Activated T-helper 2 cell treated with anti-CD3 and anti-CD28 coated beads, Interferon-gamma antibody, Interleukin-2, Interleukin-4, amounts not matched to agents 10 μg/mL and 5 μg/mL and 100 μg/mL, durations not matched to agents 14 hours and 24 hours and 36 hours (primary cell): ENCODE measurements at regions of chr21 and their contacts with region 1.

Region 1: GRCh38 chr21:41460578-41461527 is 34.8 kb downstream of the MX1 start:
- DNase-seq: peak; percentile 29
- H3K4me3 Mint-ChIP-seq: no peak overlapping the region
- H3K27ac Mint-ChIP-seq: no peak overlapping the region
- H3K4me1 Mint-ChIP-seq: peaks cover 1% of the 10 kb centered on the region
- H3K27me3 Mint-ChIP-seq: no peaks in the 10 kb centered on the region

Region 2: DNA sequence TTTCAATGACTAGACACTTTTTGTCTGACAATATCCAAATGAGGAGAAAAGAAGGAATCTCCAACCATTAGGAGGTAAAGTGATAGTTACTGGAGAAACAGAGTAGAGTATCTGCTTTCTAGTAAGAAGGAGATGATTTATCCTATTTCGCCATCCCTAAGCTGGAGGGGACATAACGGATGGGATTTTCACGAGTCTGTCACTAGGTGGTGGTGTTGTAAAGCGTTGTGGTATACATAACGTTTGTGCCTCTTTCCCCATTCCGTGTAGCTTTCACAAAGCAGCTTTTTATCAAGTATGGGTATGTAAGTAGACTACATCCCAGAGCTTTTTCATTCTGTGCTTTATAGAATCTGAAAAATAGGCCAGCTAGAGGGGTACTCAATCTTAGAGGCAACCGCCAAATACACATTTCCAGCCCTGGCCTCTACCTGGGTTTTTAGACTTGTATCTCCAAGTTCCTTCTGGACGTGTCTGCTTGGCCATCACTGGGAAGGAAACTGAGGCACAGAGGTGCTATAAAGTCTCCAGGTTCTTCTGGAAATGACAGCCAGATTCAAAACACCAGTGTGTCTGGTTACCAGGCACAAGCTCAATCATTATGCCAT is 177.5 kb before region 1 on chr21:
- intact Hi-C with region 1: loop called (anchors 1 kb)
- DNase-seq: peak; percentile 20
- H3K4me3 Mint-ChIP-seq: no peak overlapping the region
- H3K27ac Mint-ChIP-seq: no peak overlapping the region
- H3K4me1 Mint-ChIP-seq: no peaks in the 10 kb centered on the region
- H3K27me3 Mint-ChIP-seq: peaks cover 19% of the 10 kb centered on the region